Head of caudate nucleus (tissue), 42 donors: ENCODE measurements at regions of chr4 and their contacts with region 1.

Region 1: GRCh38 chr4:113547487-113548042 is 214.0 kb downstream of the CAMK2D start:
- DNase-seq: peak; percentile 69 to 94 (median 86)

Region 2: DNA sequence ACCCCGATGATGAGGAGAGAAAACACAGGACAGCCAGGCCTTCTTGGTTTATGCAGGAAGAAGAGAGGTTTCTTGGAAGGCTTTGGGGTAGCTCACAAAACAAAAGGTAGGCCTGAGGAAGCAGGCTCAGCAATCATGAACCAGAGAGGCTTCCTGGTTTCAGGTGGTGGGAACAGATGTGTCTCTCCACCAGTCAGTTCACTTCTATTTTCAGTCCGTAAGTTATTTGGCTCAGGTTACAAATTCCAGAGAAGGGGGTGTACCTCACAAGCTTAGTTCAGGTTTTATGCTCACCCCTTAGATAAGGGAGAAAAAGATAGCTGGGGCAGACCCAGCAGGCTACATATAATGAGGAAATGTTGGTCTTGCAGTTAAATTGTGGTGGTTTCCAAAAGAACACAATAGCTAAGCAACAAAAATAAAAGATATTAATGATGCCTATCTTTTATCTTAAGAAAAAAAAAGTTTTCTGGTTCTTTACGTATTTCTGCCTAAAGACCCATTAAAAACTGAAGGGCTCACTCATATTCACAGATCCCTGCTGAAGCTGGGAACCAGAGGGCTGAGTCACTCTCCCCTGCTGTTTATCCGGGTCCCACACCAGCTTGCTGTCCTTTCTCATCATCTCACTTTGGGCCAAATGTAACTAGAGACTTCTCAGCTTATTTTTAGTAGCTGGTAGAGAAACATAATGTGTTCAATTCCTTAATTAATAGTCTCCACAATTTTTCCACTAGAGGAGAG is 37.0 kb after region 1 on chr4:
- intact Hi-C with region 1: no loop called
- DNase-seq: peak in 1 of 42 donors; percentile 39

Region 3: DNA sequence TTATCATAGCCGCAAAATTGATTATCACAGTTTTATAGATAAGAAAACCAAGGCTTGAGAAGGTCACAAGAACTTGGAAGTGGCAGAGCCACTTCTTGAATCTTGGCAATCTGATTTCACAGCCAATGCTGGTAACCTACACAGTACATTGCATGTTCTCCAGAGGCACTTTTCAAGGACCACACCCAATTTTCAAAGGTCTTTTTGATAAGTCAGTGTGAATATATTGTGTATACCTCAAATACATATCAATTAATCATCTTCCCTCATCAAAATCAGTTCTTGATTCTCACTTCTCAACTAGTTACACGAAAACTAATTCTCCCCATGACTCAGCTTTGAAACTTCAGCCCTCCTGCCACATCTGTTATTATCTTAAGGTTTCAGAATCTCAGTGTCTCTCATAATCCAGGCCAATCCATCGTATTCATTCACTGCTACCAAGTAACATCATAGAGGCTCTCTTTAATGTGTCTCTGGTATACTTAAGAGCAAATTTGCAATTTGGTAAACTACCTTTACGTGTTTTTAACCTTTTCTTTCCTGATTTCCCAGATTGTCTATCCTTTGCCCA is 197.2 kb after region 1 on chr4:
- intact Hi-C with region 1: no loop called
- DNase-seq: no peak

Region 4: DNA sequence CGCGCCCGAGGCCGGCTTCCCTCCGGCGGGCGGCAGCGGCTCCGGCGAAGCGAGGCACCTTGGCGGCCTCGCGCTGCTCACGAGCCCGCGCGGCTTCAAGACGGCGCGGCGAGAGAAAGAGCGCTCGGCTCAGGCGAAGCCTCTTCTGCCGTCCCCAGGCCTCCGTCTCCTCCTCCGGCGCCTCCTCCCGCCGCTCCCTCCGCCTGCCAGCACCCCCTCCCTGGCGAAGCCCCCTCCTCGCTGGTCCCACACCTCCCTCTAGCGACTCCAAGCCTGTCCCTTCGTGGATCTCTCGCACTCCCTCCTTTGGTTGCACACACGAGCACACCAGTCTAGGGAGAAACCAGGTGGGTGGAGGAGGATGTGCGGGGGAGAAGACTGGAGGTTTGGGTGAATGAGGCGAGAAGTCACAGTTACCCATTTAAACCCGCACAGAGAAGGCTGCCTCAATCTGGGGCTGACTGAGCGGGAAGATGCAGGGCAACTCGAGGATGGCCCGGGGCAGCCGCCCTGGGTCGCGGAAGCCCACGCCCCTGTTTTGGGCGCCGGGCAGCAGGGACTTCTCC is 214.1 kb after region 1 on chr4 and contains the start of gene CAMK2D:
- intact Hi-C with region 1: loop called (anchors 5 kb)
- DNase-seq: peak; percentile 69 to 96 (median 89)

Region 5: GRCh38 chr4:114040319-114041116 is 493.0 kb after region 1 on chr4:
- intact Hi-C with region 1: no loop called
- DNase-seq: no peak